ENCODE measurements at regions of chr20 and their contacts with region 1.

Region 1: GRCh38 chr20:62793912-62794724 is 2.2 kb upstream of the MRGBP start:
- DNase-seq: peak; percentile 89 to 99 (median 94)
- ATAC-seq: peak; percentile 76
- H3K4me3 ChIP-seq: peak overlapping the region; percentile 69 to 84
- H3K4me3 Mint-ChIP-seq: peak overlapping the region; percentile 89
- H3K27ac ChIP-seq: peak overlapping the region; percentile 75 to 95
- H3K27ac Mint-ChIP-seq: peak overlapping the region; percentile 93
- H3K4me1 ChIP-seq: peaks cover 38% of the 10 kb centered on the region
- H3K4me1 Mint-ChIP-seq: peaks cover 30% of the 10 kb centered on the region
- H3K27me3 ChIP-seq: no peaks in the 10 kb centered on the region
- H3K27me3 Mint-ChIP-seq: no peaks in the 10 kb centered on the region
- CTCF ChIP-seq: no peak

Region 2: GRCh38 chr20:62386383-62387218 is 407.5 kb before region 1 on chr20 and contains the start of gene RPS21:
- CTCF ChIA-PET with region 1: no interaction called
- POLR2A ChIA-PET with region 1: no interaction called
- intact Hi-C with region 1: loop called in 1 of 2 experiments (anchors 2 kb)
- DNase-seq: peak; percentile 86 to 97 (median 94)
- ATAC-seq: peak; percentile 88
- H3K4me3 ChIP-seq: peak within 1 kb of the TSS; percentile 93 to 96
- H3K4me3 Mint-ChIP-seq: peak within 1 kb of the TSS; percentile 91
- H3K27ac ChIP-seq: peak within 1 kb of the TSS; percentile 96 to 98
- H3K27ac Mint-ChIP-seq: peak within 1 kb of the TSS; percentile 95
- H3K4me1 ChIP-seq: peaks cover 37% of the 10 kb centered on the region
- H3K4me1 Mint-ChIP-seq: peaks cover 44% of the 10 kb centered on the region
- H3K27me3 ChIP-seq: no peaks in the 10 kb centered on the region
- H3K27me3 Mint-ChIP-seq: no peaks in the 10 kb centered on the region
- CTCF ChIP-seq: no peak
- total RNA-seq, gene RPS21: 3,441 to 3,445 TPM

Region 3: DNA sequence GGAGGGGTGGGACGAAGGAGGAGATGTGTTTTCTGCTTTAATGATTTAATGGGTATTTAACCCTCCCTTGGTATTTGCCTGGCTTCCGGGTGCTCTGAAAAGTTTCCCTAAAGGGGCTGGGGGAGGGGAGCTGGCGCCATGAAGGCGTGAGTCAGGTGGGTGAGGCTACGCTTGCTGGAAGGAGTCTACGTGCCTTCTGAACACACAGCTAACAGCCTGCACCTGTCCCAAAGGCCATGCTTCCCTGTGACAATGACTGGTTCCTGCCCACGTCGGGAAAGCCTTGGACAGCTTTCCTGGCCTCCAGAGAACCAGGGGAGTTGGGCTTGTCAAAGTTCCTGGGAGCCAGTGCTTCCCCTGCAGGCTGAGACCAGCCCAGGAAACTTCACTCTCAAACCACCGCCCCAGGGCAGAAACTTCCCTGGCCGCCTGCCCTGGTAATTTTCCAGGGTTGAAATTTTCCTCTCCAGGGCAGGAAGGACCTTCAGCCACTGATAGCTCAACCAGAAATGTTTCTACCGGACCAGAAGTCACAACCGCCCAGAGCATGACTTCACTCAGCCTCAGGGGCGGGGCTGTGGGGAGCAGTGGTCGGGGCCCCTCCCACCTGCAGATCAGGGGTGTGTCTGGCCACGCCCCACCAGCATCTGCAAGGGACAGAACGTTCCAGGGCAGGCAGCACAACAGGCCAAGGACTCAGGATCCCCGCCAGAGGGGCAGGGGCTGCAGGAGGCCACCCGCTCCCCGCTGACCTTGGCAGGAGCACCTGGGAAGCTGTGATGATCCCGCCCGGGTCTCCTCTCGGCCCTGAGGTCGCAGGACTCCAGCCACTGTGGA is 170.4 kb before region 1 on chr20:
- CTCF ChIA-PET with region 1: no interaction called
- POLR2A ChIA-PET with region 1: no interaction called
- intact Hi-C with region 1: loop called in 1 of 2 experiments (anchors 5 kb)
- DNase-seq: peak; percentile 65 to 87 (median 84)
- ATAC-seq: peak; percentile 97
- H3K4me3 ChIP-seq: peak overlapping the region; percentile 24 to 28
- H3K4me3 Mint-ChIP-seq: peak overlapping the region; percentile 60
- H3K27ac ChIP-seq: peak overlapping the region in 1 of 2 experiments; percentile 12
- H3K27ac Mint-ChIP-seq: peak overlapping the region; percentile 60
- H3K4me1 ChIP-seq: peaks cover 19% of the 10 kb centered on the region
- H3K4me1 Mint-ChIP-seq: peaks cover 14% of the 10 kb centered on the region
- H3K27me3 ChIP-seq: no peaks in the 10 kb centered on the region
- H3K27me3 Mint-ChIP-seq: no peaks in the 10 kb centered on the region
- CTCF ChIP-seq: no peak

Region 4: DNA sequence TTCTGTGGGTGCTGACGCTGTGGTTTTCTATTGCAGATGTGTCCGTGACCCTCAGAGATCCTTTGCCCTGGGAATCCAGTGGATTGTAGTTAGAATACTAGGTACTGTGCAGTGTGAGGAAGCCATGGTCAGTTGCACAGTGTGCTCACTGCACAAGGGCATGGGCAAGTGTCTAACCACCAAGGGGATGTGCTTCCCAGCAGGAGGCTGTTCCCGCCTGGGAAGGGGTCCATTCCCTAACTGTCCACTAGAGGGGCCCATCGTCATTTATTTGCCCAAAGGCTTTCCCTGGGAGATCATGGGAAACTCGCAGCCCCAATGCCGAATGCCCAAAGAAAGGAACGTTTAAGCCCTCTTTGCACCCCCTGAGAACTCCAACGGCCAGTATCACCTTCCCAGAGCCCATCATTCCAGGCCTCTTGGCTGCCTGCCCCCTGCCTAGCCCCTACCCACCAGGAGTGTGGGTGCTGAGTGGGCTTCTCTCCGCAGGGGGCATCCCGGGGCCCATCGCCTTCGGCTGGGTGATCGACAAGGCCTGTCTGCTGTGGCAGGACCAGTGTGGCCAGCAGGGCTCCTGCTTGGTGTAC is 125.6 kb before region 1 on chr20:
- CTCF ChIA-PET with region 1: interaction called, 12 read pairs
- POLR2A ChIA-PET with region 1: interaction called, 5 read pairs
- intact Hi-C with region 1: loop called in 1 of 2 experiments (anchors 1 kb)
- DNase-seq: peak in 7 of 9 experiments; percentile 11 to 67 (median 49)
- ATAC-seq: peak; percentile 53
- H3K4me3 ChIP-seq: no peak overlapping the region
- H3K4me3 Mint-ChIP-seq: no peak overlapping the region
- H3K27ac ChIP-seq: no peak overlapping the region
- H3K27ac Mint-ChIP-seq: no peak overlapping the region
- H3K4me1 ChIP-seq: no peaks in the 10 kb centered on the region
- H3K4me1 Mint-ChIP-seq: no peaks in the 10 kb centered on the region
- H3K27me3 ChIP-seq: no peaks in the 10 kb centered on the region
- H3K27me3 Mint-ChIP-seq: no peaks in the 10 kb centered on the region
- CTCF ChIP-seq: peak; percentile 52

Region 5: GRCh38 chr20:62776692-62777527 is 17.2 kb before region 1 on chr20:
- CTCF ChIA-PET with region 1: interaction called, 12 read pairs
- POLR2A ChIA-PET with region 1: interaction called, 14 read pairs
- intact Hi-C with region 1: loop called (anchors 1 kb)
- DNase-seq: peak in 8 of 9 experiments; percentile 40 to 84 (median 70)
- ATAC-seq: peak; percentile 95
- H3K4me3 ChIP-seq: peak overlapping the region; percentile 31 to 58
- H3K4me3 Mint-ChIP-seq: peak overlapping the region; percentile 66
- H3K27ac ChIP-seq: peak overlapping the region; percentile 71 to 89
- H3K27ac Mint-ChIP-seq: peak overlapping the region; percentile 93
- H3K4me1 ChIP-seq: peaks cover 50% of the 10 kb centered on the region
- H3K4me1 Mint-ChIP-seq: peaks cover 51% of the 10 kb centered on the region
- H3K27me3 ChIP-seq: no peaks in the 10 kb centered on the region
- H3K27me3 Mint-ChIP-seq: no peaks in the 10 kb centered on the region
- CTCF ChIP-seq: no peak

Region 6: DNA sequence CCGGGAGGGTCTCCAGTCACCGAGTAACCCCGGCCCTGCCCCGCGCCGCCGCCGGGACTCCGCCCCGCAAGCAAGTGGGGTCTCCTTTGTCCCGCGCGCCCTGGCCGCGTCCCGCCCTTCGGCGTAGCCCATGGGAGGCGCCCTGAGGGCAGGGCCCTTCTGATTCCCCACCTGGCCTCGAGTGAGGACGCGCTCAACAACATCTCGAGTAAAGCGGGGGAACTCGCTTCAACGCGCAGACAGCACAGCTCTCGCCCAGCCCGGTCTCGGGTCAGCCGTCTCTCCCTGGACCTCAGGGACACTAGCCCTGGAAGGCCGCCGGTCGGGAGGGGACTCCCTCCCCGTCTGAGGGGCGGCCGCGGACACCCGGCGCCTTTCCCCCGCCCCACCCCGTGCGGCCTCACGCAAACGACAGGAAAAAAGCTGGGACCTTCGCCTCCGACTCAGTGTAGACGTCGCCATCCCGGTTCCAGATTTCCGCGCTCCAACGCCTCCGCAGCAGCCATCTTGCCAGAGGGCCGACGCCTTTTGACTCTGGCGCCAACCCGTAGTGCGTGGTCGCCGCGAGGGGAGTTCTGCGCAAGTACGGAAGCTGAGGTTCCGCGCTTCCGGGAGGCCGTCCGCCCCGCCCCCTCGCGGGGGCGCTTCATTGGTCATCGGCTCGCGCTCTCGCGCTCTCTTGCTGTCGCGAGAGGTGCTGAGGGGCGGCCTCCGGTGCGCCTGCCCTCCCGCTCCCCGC is 143.4 kb after region 1 on chr20:
- CTCF ChIA-PET with region 1: no interaction called
- POLR2A ChIA-PET with region 1: interaction called, 5 read pairs
- intact Hi-C with region 1: loop called in 1 of 2 experiments (anchors 5 kb)
- DNase-seq: peak; percentile 94 to 98 (median 97)
- ATAC-seq: peak; percentile 89
- H3K4me3 ChIP-seq: peak overlapping the region; percentile 96 to 99
- H3K4me3 Mint-ChIP-seq: peak overlapping the region; percentile 97
- H3K27ac ChIP-seq: peak overlapping the region; percentile 88 to 92
- H3K27ac Mint-ChIP-seq: peak overlapping the region; percentile 96
- H3K4me1 ChIP-seq: peaks cover 57% of the 10 kb centered on the region
- H3K4me1 Mint-ChIP-seq: peaks cover 36% of the 10 kb centered on the region
- H3K27me3 ChIP-seq: no peaks in the 10 kb centered on the region
- H3K27me3 Mint-ChIP-seq: no peaks in the 10 kb centered on the region
- CTCF ChIP-seq: no peak

Region 7: GRCh38 chr20:63442100-63442493 is 648.0 kb after region 1 on chr20:
- CTCF ChIA-PET with region 1: no interaction called
- POLR2A ChIA-PET with region 1: no interaction called
- intact Hi-C with region 1: no loop called
- DNase-seq: peak; percentile 23 to 75 (median 62)
- ATAC-seq: peak; percentile 71
- H3K4me3 ChIP-seq: no peak overlapping the region
- H3K4me3 Mint-ChIP-seq: no peak overlapping the region
- H3K27ac ChIP-seq: no peak overlapping the region
- H3K27ac Mint-ChIP-seq: peak overlapping the region; percentile 4
- H3K4me1 ChIP-seq: peaks cover 17% of the 10 kb centered on the region
- H3K4me1 Mint-ChIP-seq: peaks cover 15% of the 10 kb centered on the region
- H3K27me3 ChIP-seq: no peaks in the 10 kb centered on the region
- H3K27me3 Mint-ChIP-seq: peaks cover 2% of the 10 kb centered on the region
- CTCF ChIP-seq: no peak